ENCODE measurements at regions of chr15 and their contacts with region 1.

Region 1: DNA sequence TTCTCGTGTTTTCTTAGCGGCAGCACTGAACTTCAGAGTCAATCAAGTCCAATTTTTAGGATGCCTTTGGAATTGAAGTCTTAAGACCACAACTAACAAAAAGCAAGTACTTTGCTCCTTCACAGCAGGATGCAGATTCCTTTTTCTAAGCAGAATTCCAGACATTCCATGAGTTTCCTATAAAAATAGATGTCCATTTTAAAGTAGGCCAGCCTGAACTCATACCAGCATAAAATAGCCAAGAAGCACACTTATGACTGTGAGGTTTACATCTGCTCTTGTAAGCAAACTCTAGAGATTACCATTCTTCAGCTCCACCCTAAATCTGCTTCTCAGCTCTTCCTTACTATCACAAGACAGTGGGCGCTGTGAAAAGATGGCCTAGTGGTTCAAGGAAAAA is 85.8 kb downstream of the THBS1 start:
- DNase-seq: no peak
- ATAC-seq: no peak
- H3K4me3 ChIP-seq: no peak overlapping the region
- H3K27ac ChIP-seq: no peak overlapping the region
- H3K4me1 ChIP-seq: peaks cover 0 to 11% (median 0%) of the 10 kb centered on the region in 12 donors
- H3K27me3 ChIP-seq: no peaks in the 10 kb centered on the region
- CTCF ChIP-seq: no peak
- POLR2A ChIP-seq: no peak

Region 2: DNA sequence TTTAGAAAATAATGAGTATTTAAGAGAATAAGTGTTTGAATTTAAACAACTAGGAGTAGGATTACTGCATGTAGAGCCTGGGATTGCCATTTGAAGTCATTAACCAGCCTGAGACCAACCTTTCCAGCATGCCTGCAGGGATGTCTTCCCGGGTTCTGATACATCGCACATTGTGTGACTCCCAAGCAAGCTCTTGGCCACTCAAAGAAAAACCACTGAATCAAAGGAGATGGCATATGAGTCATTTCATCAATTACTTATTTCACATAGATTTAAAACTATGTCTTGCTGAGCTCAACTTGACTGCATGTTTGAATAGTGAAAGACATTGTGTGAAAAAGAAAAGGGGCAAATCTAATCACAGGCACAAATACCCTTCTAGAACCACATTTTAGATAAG is 100.8 kb before region 1 on chr15:
- intact Hi-C with region 1: no loop called
- DNase-seq: no peak
- ATAC-seq: no peak
- H3K4me3 ChIP-seq: no peak overlapping the region
- H3K27ac ChIP-seq: no peak overlapping the region
- H3K4me1 ChIP-seq: no peaks in the 10 kb centered on the region
- H3K27me3 ChIP-seq: no peaks in the 10 kb centered on the region
- CTCF ChIP-seq: no peak
- POLR2A ChIP-seq: no peak

Region 3: DNA sequence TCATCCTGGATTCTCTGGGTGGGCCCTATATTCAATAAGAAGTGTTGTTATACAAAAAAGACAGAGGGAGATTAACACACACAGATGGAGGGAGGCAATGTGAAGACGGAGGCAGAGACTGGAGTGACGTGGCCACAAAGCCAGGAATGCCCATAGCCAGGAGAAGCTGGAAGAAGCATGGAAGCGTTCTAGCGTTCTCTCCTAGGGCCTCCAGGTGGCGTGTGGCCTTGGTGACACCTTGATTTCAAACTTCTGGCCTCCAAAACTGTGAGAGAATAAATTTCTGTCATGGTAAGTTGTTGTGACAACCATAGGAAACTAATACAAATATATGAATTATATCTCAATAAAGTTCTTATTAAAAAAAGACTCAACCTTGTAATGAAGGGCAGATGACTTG is 64.5 kb before region 1 on chr15:
- intact Hi-C with region 1: loop called in 1 of 10 experiments (anchors 10 kb)
- DNase-seq: no peak
- ATAC-seq: no peak
- H3K4me3 ChIP-seq: no peak overlapping the region
- H3K27ac ChIP-seq: no peak overlapping the region
- H3K4me1 ChIP-seq: peaks cover 0 to 4% (median 0%) of the 10 kb centered on the region in 12 donors
- H3K27me3 ChIP-seq: no peaks in the 10 kb centered on the region
- CTCF ChIP-seq: no peak
- POLR2A ChIP-seq: no peak